Head of caudate nucleus (tissue), 42 donors: ENCODE measurements at regions of chr1 and their contacts with region 1.

Region 1: GRCh38 chr1:162596514-162597170 is 35.1 kb downstream of the UAP1 start:
- DNase-seq: no peak

Region 2: DNA sequence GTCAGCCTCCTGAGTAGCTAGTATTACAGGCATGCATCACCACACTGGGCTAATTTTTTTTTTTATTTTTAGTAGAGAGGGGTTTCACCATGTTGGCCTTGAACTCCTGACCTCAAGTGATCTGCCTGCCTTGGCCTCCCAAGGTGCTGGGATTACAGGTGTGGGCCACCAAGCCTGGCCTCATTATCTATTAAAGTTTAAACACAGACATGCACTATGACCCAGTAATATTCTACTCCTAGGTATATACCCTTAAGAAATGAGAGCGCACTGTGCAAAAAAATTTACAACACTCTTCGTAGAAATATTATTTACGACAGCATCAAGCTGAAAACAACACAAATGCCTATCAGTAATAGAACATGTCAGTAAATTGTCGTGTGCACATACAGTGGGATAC is 166.1 kb before region 1 on chr1:
- intact Hi-C with region 1: no loop called
- DNase-seq: no peak

Region 3: GRCh38 chr1:162548170-162548569 is 48.5 kb before region 1 on chr1:
- intact Hi-C with region 1: no loop called
- DNase-seq: peak in 36 of 42 donors; percentile 10 to 85 (median 46)

Region 4: DNA sequence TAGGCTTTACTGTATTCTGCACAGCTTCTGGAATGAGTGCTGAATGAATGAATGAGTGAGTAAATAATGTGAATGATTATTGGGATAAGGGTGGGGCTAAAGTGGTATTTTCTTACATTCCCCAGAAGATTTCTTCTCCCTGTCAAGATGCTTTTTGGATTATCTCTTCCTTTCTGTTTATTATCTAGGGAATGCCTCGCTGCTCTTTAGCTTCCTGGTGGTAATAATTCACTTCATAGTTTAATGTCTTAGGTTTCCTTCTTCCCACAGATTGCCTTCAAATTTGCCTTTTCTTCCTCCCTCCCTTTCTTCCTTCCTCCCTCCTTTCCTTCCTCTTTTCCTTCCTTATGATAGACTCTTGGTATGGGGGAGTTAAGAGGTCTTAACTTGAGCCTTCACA is 59.6 kb after region 1 on chr1:
- intact Hi-C with region 1: loop called (anchors 10 kb)
- DNase-seq: no peak